ENCODE measurements at regions of chr4 and their contacts with region 1.

Region 1: DNA sequence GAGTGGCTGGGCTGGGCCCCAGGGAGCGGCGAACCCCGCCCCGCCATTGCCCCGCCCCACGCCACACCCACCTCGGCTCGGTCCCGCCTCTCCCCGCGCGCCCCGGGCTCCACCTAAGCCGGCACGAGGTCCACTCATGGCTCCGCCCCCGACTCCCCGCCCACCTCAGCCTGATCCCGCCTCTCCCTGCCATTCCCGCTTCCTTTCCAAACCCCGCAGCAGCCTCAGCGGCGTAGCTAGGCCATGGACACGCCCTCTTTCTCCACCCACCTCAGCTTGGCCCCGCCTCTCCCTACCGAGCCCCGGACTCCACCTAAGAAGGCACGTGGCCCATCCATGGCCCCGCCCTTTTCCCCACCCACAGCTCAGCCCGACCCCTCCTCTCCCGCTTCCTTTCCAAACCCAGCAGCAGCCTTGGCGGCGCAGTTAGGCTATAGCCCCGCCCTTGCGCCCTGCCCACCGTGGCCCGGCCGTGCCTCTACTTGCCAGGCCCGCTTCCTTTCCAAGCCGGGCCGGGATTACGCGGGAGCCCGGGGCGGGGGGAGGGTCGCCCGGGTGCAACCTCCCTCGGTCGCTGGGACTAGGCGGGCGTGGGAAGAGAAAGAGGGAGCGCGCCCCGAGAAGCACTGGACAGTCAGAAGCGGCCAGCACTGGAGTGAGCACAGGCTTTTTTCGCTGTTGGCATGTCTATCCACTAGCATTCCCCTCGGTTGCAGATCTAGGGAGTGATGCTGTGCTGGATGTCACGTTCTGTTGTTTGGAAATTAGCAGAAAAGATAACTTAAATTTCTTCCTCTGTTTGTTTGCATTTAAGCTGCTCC is at the start of gene RELL1:
- DNase-seq: peak; percentile 96 to 99 (median 99)
- ATAC-seq: peak; percentile 92
- H3K4me3 ChIP-seq: peak within 1 kb of the TSS; percentile 50
- H3K4me3 Mint-ChIP-seq: peak within 1 kb of the TSS; percentile 92 to 98 (median 96)
- H3K27ac ChIP-seq: peak within 1 kb of the TSS; percentile 92
- H3K27ac Mint-ChIP-seq: peak within 1 kb of the TSS; percentile 88 to 99 (median 95)
- H3K4me1 ChIP-seq: peaks cover 22 to 30% of the 10 kb centered on the region in 2 donors
- H3K4me1 Mint-ChIP-seq: peaks cover 34 to 41% (median 39%) of the 10 kb centered on the region in 7 donors
- H3K27me3 ChIP-seq: no peaks in the 10 kb centered on the region
- H3K27me3 Mint-ChIP-seq: peaks cover 0 to 11% (median 0%) of the 10 kb centered on the region in 5 donors
- total RNA-seq, gene RELL1: 25.5 to 35.2 (median 28.2) TPM

Region 2: DNA sequence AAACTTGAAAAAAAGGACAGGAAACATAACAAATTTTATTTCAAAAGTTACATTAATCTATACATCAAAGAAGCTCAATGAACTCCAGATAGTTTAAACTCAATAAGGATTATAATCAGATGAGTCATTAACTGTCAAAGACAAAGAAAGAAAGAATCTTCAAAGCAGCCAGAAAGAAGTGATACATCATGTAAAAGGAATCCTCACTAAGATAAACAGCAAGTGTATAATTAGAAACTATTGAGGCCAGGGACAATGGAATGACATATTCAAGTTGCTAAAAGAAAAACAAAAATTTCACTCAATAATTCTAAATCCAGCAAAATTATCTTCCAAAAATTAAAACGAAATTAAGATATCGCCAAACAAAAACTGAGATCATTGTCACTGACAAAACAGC is 603.7 kb before region 1 on chr4:
- CTCF ChIA-PET with region 1: no interaction called
- POLR2A ChIA-PET with region 1: no interaction called
- intact Hi-C with region 1: no loop called
- DNase-seq: no peak
- ATAC-seq: no peak
- H3K4me3 ChIP-seq: no peak overlapping the region
- H3K4me3 Mint-ChIP-seq: no peak overlapping the region
- H3K27ac ChIP-seq: no peak overlapping the region
- H3K27ac Mint-ChIP-seq: no peak overlapping the region
- H3K4me1 ChIP-seq: no peaks in the 10 kb centered on the region
- H3K4me1 Mint-ChIP-seq: no peaks in the 10 kb centered on the region
- H3K27me3 ChIP-seq: no peaks in the 10 kb centered on the region
- H3K27me3 Mint-ChIP-seq: no peaks in the 10 kb centered on the region

Region 3: GRCh38 chr4:37452952-37453280 is 233.7 kb before region 1 on chr4:
- CTCF ChIA-PET with region 1: interaction called, 3 read pairs
- POLR2A ChIA-PET with region 1: no interaction called
- intact Hi-C with region 1: loop called (anchors 1 to 10 kb)
- DNase-seq: peak in 7 of 9 donors; percentile 21 to 57 (median 46)
- ATAC-seq: peak; percentile 64
- H3K4me3 ChIP-seq: peak overlapping the region; percentile 66
- H3K4me3 Mint-ChIP-seq: peak overlapping the region; percentile 79 to 89 (median 86)
- H3K27ac ChIP-seq: no peak overlapping the region
- H3K27ac Mint-ChIP-seq: peak overlapping the region in 2 of 9 donors; percentile 18 to 38
- H3K4me1 ChIP-seq: peaks cover 0 to 14% of the 10 kb centered on the region in 2 donors
- H3K4me1 Mint-ChIP-seq: peaks cover 0 to 18% (median 14%) of the 10 kb centered on the region in 7 donors
- H3K27me3 ChIP-seq: peaks cover 0 to 4% of the 10 kb centered on the region in 2 donors
- H3K27me3 Mint-ChIP-seq: peaks cover 31 to 80% (median 61%) of the 10 kb centered on the region in 5 donors

Region 4: DNA sequence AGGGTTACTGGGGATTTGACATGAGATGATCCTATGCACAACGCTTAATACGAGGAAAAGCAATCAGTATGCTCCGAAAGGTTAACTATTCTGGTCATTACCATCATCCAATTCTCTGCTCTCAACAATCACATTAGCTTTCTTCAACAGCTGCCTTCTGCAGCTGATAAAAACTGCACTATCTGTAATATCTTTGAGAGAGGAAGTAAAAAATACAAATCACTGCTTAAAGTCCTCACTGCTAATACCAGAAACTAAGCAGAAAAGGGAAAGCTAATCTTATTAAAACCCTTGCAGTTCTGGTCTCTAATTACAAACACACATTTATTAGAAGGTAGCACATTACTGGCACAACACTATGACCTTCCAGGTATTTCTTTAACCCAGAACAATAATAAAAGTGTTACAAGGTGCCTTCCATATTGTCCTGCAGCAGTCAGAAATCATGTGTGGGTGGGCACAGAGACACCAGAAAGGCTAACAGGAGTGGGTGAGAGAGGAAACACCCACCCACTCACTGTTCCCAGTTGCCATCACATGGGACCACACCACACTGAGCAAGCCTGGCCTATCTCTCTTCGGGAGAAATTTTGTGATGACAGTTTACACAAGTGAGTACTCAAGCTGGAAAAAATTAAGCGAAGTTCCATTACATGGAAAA is 71.4 kb before region 1 on chr4:
- CTCF ChIA-PET with region 1: no interaction called
- POLR2A ChIA-PET with region 1: no interaction called
- intact Hi-C with region 1: no loop called
- DNase-seq: no peak
- ATAC-seq: no peak
- H3K4me3 ChIP-seq: no peak overlapping the region
- H3K4me3 Mint-ChIP-seq: no peak overlapping the region
- H3K27ac ChIP-seq: no peak overlapping the region
- H3K27ac Mint-ChIP-seq: peak overlapping the region in 4 of 9 donors; percentile 9 to 68 (median 54)
- H3K4me1 ChIP-seq: no peaks in the 10 kb centered on the region
- H3K4me1 Mint-ChIP-seq: peaks cover 0 to 7% (median 4%) of the 10 kb centered on the region in 7 donors
- H3K27me3 ChIP-seq: no peaks in the 10 kb centered on the region
- H3K27me3 Mint-ChIP-seq: no peaks in the 10 kb centered on the region

Region 5: DNA sequence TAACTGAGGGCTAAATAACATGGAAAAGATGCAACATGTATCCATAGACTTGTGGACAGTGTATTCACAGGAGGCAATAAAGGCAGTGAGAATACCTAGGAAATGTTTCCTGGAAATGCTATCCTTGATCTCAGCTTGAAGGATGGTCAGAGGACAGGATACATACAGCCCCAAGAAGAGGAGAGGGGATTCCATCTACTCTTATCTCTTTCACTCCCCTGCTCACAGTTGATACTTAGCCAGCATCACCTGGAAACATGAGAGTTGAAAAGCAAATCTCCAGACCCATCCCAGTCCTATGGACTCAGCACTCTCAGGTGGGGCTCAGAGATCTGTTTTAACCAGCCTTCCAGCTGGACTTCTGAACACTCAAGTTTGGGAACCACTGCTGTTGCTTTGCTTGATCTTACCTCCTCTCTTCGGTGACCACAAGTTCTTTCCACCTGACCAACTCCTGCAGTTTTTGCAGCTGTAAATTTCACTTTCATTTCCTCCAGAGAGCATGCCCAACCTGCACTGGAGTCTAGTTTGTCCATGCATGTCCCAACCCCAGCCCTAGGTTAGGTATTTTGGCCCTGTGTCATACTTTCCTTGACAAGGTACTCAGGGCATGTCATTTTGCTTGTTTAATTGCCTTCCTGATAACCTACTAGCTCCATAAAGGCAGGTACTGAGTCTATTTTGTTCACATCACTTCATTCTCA is 10.8 kb before region 1 on chr4:
- CTCF ChIA-PET with region 1: no interaction called
- POLR2A ChIA-PET with region 1: interaction called, 4 read pairs
- intact Hi-C with region 1: loop called (anchors 1 kb)
- DNase-seq: peak in 2 of 9 donors; percentile 7 to 30
- ATAC-seq: peak; percentile 56
- H3K4me3 ChIP-seq: no peak overlapping the region
- H3K4me3 Mint-ChIP-seq: peak overlapping the region; percentile 31 to 86 (median 74)
- H3K27ac ChIP-seq: no peak overlapping the region
- H3K27ac Mint-ChIP-seq: peak overlapping the region in 7 of 9 donors; percentile 4 to 70 (median 29)
- H3K4me1 ChIP-seq: peaks cover 18 to 21% of the 10 kb centered on the region in 2 donors
- H3K4me1 Mint-ChIP-seq: peaks cover 48 to 79% (median 76%) of the 10 kb centered on the region in 7 donors
- H3K27me3 ChIP-seq: no peaks in the 10 kb centered on the region
- H3K27me3 Mint-ChIP-seq: no peaks in the 10 kb centered on the region

Region 6: GRCh38 chr4:37891260-37892159 is 204.9 kb after region 1 on chr4:
- CTCF ChIA-PET with region 1: no interaction called
- POLR2A ChIA-PET with region 1: no interaction called
- intact Hi-C with region 1: loop called (anchors 1 kb)
- DNase-seq: peak; percentile 37 to 70 (median 58)
- ATAC-seq: peak; percentile 68
- H3K4me3 ChIP-seq: peak overlapping the region; percentile 51
- H3K4me3 Mint-ChIP-seq: peak overlapping the region; percentile 88 to 100 (median 96)
- H3K27ac ChIP-seq: peak overlapping the region; percentile 69
- H3K27ac Mint-ChIP-seq: peak overlapping the region; percentile 86 to 97 (median 92)
- H3K4me1 ChIP-seq: peaks cover 10 to 25% of the 10 kb centered on the region in 2 donors
- H3K4me1 Mint-ChIP-seq: peaks cover 28 to 66% (median 55%) of the 10 kb centered on the region in 7 donors
- H3K27me3 ChIP-seq: no peaks in the 10 kb centered on the region
- H3K27me3 Mint-ChIP-seq: peaks cover 0 to 5% (median 0%) of the 10 kb centered on the region in 5 donors

Region 7: GRCh38 chr4:38114386-38115150 is 428.0 kb after region 1 on chr4:
- CTCF ChIA-PET with region 1: no interaction called
- POLR2A ChIA-PET with region 1: no interaction called
- intact Hi-C with region 1: no loop called
- DNase-seq: no peak
- ATAC-seq: no peak
- H3K4me3 ChIP-seq: no peak overlapping the region
- H3K4me3 Mint-ChIP-seq: no peak overlapping the region
- H3K27ac ChIP-seq: no peak overlapping the region
- H3K27ac Mint-ChIP-seq: peak overlapping the region in 1 of 9 donors; percentile 24
- H3K4me1 ChIP-seq: no peaks in the 10 kb centered on the region
- H3K4me1 Mint-ChIP-seq: peaks cover 0 to 5% (median 0%) of the 10 kb centered on the region in 7 donors
- H3K27me3 ChIP-seq: no peaks in the 10 kb centered on the region
- H3K27me3 Mint-ChIP-seq: no peaks in the 10 kb centered on the region

Region 8: DNA sequence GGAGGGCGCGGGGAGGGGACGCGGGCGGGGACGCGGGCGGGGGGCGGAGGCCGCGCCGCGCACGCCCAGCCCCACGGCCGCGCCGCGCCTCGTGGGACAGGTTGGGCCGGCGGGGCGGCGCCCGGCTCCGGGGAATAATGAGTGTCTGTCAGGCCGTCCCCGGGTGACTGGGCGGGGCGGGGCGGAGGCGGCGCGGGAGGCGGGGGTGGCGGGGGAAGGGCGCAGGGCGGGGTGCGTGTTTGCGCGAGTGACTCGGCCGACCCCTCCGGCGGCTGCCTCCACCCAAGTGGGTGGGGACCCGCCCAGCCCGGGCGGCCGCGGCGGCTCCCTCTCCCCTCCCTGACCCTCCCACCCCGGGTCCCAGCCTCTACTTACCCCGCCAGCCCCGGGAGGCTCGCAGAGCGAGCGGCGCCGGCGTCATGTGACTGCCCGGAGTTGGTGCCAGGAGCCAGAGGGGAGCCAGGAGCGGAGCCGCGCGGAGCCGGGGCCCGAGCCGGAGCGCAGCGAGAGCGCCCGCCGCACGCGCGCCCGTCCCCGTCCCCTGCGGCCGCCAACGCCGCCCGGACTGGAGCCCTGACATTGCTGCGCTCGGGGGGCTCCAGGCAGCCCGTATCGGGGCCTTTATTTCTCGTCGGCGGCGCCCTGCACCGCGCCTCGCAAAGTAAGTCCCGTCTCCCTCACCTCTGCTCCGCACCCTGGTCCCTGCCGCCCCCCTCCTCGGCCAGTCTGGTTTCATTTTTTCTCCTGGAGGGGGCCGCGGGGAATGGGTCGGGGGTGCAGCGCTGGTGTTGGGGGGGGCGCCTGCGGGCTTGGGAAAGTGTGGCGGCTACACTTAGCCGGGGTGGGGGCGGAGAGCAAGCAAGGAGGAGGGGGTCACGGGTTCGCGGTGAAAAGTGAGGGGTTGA is 977.5 kb after region 1 on chr4 and contains the start of gene KLF3:
- CTCF ChIA-PET with region 1: no interaction called
- POLR2A ChIA-PET with region 1: no interaction called
- intact Hi-C with region 1: loop called in 1 of 2 experiments (anchors 10 kb)
- DNase-seq: peak in 7 of 9 donors; percentile 91 to 95 (median 93)
- ATAC-seq: peak; percentile 86
- H3K4me3 ChIP-seq: peak within 1 kb of the TSS; percentile 64
- H3K4me3 Mint-ChIP-seq: peak within 1 kb of the TSS; percentile 85 to 100 (median 99)
- H3K27ac ChIP-seq: peak within 1 kb of the TSS; percentile 98
- H3K27ac Mint-ChIP-seq: peak within 1 kb of the TSS; percentile 85 to 100 (median 95)
- H3K4me1 ChIP-seq: peaks cover 33 to 50% of the 10 kb centered on the region in 2 donors
- H3K4me1 Mint-ChIP-seq: peaks cover 40 to 57% (median 53%) of the 10 kb centered on the region in 7 donors
- H3K27me3 ChIP-seq: no peaks in the 10 kb centered on the region
- H3K27me3 Mint-ChIP-seq: peaks cover 0 to 63% (median 0%) of the 10 kb centered on the region in 5 donors
- total RNA-seq, gene KLF3: 21.0 to 142 (median 132) TPM

Region 9: GRCh38 chr4:39353478-39354253 is 1667.1 kb after region 1 on chr4:
- CTCF ChIA-PET with region 1: no interaction called
- POLR2A ChIA-PET with region 1: no interaction called
- intact Hi-C with region 1: loop called in 1 of 2 experiments (anchors 10 kb)
- DNase-seq: peak in 7 of 9 donors; percentile 39 to 71 (median 63)
- ATAC-seq: peak; percentile 86
- H3K4me3 ChIP-seq: peak overlapping the region; percentile 48
- H3K4me3 Mint-ChIP-seq: peak overlapping the region; percentile 82 to 89 (median 84)
- H3K27ac ChIP-seq: peak overlapping the region; percentile 70
- H3K27ac Mint-ChIP-seq: peak overlapping the region; percentile 88 to 98 (median 95)
- H3K4me1 ChIP-seq: peaks cover 17 to 34% of the 10 kb centered on the region in 2 donors
- H3K4me1 Mint-ChIP-seq: peaks cover 20 to 75% (median 59%) of the 10 kb centered on the region in 7 donors
- H3K27me3 ChIP-seq: no peaks in the 10 kb centered on the region
- H3K27me3 Mint-ChIP-seq: no peaks in the 10 kb centered on the region